ENCODE measurements at regions of chr2 and their contacts with region 1.

Region 1: GRCh38 chr2:99559075-99559662 is 69.4 kb upstream of the REV1 start:
- DNase-seq: peak; percentile 36
- H3K4me3 ChIP-seq: no peak overlapping the region
- H3K27ac ChIP-seq: no peak overlapping the region
- H3K27me3 ChIP-seq: no peaks in the 10 kb centered on the region
- CTCF ChIP-seq: peak; percentile 98

Region 2: GRCh38 chr2:99572373-99573164 is 13.4 kb after region 1 on chr2:
- CTCF ChIA-PET with region 1: interaction called, 14 read pairs
- POLR2A ChIA-PET with region 1: no interaction called
- DNase-seq: no peak
- H3K4me3 ChIP-seq: no peak overlapping the region
- H3K27ac ChIP-seq: no peak overlapping the region
- H3K27me3 ChIP-seq: no peaks in the 10 kb centered on the region
- CTCF ChIP-seq: no peak

Region 3: GRCh38 chr2:99754210-99754609 is 195.0 kb after region 1 on chr2:
- CTCF ChIA-PET with region 1: no interaction called
- POLR2A ChIA-PET with region 1: no interaction called
- DNase-seq: peak; percentile 10
- H3K4me3 ChIP-seq: no peak overlapping the region
- H3K27ac ChIP-seq: no peak overlapping the region
- H3K27me3 ChIP-seq: no peaks in the 10 kb centered on the region
- CTCF ChIP-seq: no peak

Region 4: GRCh38 chr2:100246163-100247145 is 687.3 kb after region 1 on chr2:
- CTCF ChIA-PET with region 1: interaction called, 11 read pairs
- POLR2A ChIA-PET with region 1: no interaction called
- DNase-seq: no peak
- H3K4me3 ChIP-seq: no peak overlapping the region
- H3K27ac ChIP-seq: no peak overlapping the region
- H3K27me3 ChIP-seq: peaks cover 4% of the 10 kb centered on the region
- CTCF ChIP-seq: peak; percentile 45